ENCODE measurements at regions of chr14 and their contacts with region 1.

Region 1: GRCh38 chr14:94485944-94486841 is 10.2 kb upstream of the SERPINA9 start:
- DNase-seq: peak; percentile 38
- H3K4me3 Mint-ChIP-seq: no peak overlapping the region
- H3K27ac Mint-ChIP-seq: no peak overlapping the region
- H3K4me1 Mint-ChIP-seq: no peaks in the 10 kb centered on the region
- H3K27me3 Mint-ChIP-seq: no peaks in the 10 kb centered on the region

Region 2: GRCh38 chr14:94428610-94429009 is 57.6 kb before region 1 on chr14:
- CTCF ChIA-PET with region 1: interaction called, 19 read pairs
- POLR2A ChIA-PET with region 1: no interaction called
- DNase-seq: no peak
- H3K4me3 Mint-ChIP-seq: no peak overlapping the region
- H3K27ac Mint-ChIP-seq: no peak overlapping the region
- H3K4me1 Mint-ChIP-seq: no peaks in the 10 kb centered on the region
- H3K27me3 Mint-ChIP-seq: no peaks in the 10 kb centered on the region

Region 3: GRCh38 chr14:94500264-94500663 is 14.1 kb after region 1 on chr14:
- CTCF ChIA-PET with region 1: interaction called, 15 read pairs
- POLR2A ChIA-PET with region 1: no interaction called
- DNase-seq: no peak
- H3K4me3 Mint-ChIP-seq: no peak overlapping the region
- H3K27ac Mint-ChIP-seq: no peak overlapping the region
- H3K4me1 Mint-ChIP-seq: no peaks in the 10 kb centered on the region
- H3K27me3 Mint-ChIP-seq: no peaks in the 10 kb centered on the region